IMR-90 (cell line): ENCODE measurements at regions of chr7 and their contacts with region 1.

Region 1: GRCh38 chr7:85750454-85750949 is 563.6 kb upstream of the SEMA3D start:
- DNase-seq: peak; percentile 37
- ATAC-seq: peak; percentile 93
- H3K4me3 ChIP-seq: no peak overlapping the region
- H3K27ac ChIP-seq: no peak overlapping the region
- H3K4me1 ChIP-seq: no peaks in the 10 kb centered on the region
- H3K27me3 ChIP-seq: no peaks in the 10 kb centered on the region
- CTCF ChIP-seq: peak; percentile 80
- POLR2A ChIP-seq: no peak
- RAD21 ChIP-seq: peak; percentile 80

Region 2: GRCh38 chr7:83921941-83922607 is 1828.4 kb before region 1 on chr7:
- CTCF ChIA-PET with region 1: no interaction called
- POLR2A ChIA-PET with region 1: no interaction called
- dilution Hi-C with region 1: no loop called
- in situ Hi-C with region 1: loop called (anchors 25 kb)
- intact Hi-C with region 1: no loop called
- DNase-seq: peak; percentile 69
- ATAC-seq: peak; percentile 81
- H3K4me3 ChIP-seq: no peak overlapping the region
- H3K27ac ChIP-seq: no peak overlapping the region
- H3K4me1 ChIP-seq: no peaks in the 10 kb centered on the region
- H3K27me3 ChIP-seq: no peaks in the 10 kb centered on the region
- CTCF ChIP-seq: no peak
- POLR2A ChIP-seq: no peak
- RAD21 ChIP-seq: no peak

Region 3: GRCh38 chr7:83936056-83936708 is 1814.3 kb before region 1 on chr7:
- CTCF ChIA-PET with region 1: no interaction called
- POLR2A ChIA-PET with region 1: no interaction called
- dilution Hi-C with region 1: no loop called
- in situ Hi-C with region 1: no loop called
- intact Hi-C with region 1: loop called (anchors 5 kb)
- DNase-seq: peak; percentile 81
- ATAC-seq: peak; percentile 95
- H3K4me3 ChIP-seq: no peak overlapping the region
- H3K27ac ChIP-seq: no peak overlapping the region
- H3K4me1 ChIP-seq: no peaks in the 10 kb centered on the region
- H3K27me3 ChIP-seq: no peaks in the 10 kb centered on the region
- CTCF ChIP-seq: peak; percentile 93
- POLR2A ChIP-seq: no peak
- RAD21 ChIP-seq: peak; percentile 95

Region 4: DNA sequence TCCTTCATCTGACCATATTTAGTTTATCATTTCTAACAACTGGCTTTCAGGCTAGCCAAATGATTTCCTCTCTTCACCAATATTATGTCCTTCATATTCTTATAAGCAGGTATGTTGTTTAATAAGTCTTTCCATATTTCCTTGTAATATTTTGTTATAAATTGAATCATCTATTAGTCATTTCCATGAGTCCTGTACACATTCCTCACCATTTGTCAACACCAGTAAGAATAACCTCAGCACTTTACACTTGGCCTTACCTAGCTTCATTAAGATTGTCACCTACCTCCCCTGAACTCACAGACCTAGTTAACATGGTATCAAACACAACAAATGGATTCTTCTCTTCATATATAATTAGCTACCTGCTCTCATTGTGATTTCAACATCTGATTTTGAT is 845.9 kb before region 1 on chr7:
- CTCF ChIA-PET with region 1: no interaction called
- POLR2A ChIA-PET with region 1: no interaction called
- dilution Hi-C with region 1: no loop called
- in situ Hi-C with region 1: no loop called
- intact Hi-C with region 1: no loop called
- DNase-seq: no peak
- ATAC-seq: no peak
- H3K4me3 ChIP-seq: no peak overlapping the region
- H3K27ac ChIP-seq: no peak overlapping the region
- H3K4me1 ChIP-seq: no peaks in the 10 kb centered on the region
- H3K27me3 ChIP-seq: no peaks in the 10 kb centered on the region
- CTCF ChIP-seq: no peak
- POLR2A ChIP-seq: no peak
- RAD21 ChIP-seq: no peak

Region 5: DNA sequence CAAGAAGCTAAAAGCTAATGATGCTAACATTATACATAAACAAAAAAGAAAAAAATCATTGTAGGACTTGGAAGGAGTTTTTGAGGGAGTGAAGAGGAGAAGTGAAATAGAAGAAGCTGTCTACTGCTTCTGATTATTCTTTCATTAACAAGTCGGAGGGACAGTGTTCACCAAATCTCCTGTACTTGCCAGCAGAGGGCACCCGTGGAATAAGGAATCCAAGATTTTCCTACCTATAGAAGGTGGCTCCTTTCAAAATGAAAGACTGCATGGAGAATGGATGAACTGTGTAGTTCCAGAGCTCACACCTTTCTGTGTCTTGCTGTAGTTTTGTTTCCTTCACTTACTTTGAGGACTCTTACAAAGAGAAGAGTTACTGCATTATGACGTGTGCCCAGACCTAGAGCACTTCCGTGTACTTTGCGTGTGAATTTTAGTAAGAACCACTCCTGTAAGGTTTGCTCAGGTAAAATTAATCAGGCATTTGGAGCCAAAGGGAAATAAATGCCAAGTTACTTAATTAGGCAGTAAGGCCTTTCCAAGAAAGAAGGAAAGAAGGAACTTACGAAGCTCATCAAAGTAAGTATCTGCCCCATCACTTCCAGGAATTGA is 708.8 kb before region 1 on chr7:
- CTCF ChIA-PET with region 1: interaction called, 4 read pairs
- POLR2A ChIA-PET with region 1: no interaction called
- dilution Hi-C with region 1: no loop called
- in situ Hi-C with region 1: loop called (anchors 5 kb)
- intact Hi-C with region 1: loop called (anchors 1 kb)
- DNase-seq: peak; percentile 69
- ATAC-seq: peak; percentile 73
- H3K4me3 ChIP-seq: no peak overlapping the region
- H3K27ac ChIP-seq: no peak overlapping the region
- H3K4me1 ChIP-seq: no peaks in the 10 kb centered on the region
- H3K27me3 ChIP-seq: no peaks in the 10 kb centered on the region
- CTCF ChIP-seq: peak; percentile 86
- POLR2A ChIP-seq: no peak
- RAD21 ChIP-seq: peak; percentile 92

Region 6: DNA sequence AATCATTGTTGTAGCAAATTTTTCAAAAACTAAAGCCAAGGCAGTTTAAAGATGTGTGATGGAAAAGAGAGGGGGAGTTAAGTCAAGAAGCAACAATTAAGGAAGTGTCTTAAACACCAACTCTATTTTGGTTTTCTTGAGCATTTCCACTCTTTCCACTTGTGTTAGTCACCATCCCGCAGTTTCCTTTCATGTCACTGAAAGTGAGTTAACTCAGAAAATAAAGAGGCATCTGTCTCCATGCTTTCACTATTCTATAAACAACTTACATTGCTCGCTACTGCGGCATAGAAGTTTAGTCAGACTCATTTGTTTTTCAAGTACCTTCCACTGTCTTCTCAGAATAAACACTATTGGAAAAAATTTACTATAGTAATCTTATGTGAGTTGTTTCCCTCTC is 278.8 kb before region 1 on chr7:
- CTCF ChIA-PET with region 1: no interaction called
- POLR2A ChIA-PET with region 1: no interaction called
- dilution Hi-C with region 1: no loop called
- in situ Hi-C with region 1: no loop called
- intact Hi-C with region 1: loop called (anchors 5 kb)
- DNase-seq: peak; percentile 86
- ATAC-seq: peak; percentile 95
- H3K4me3 ChIP-seq: no peak overlapping the region
- H3K27ac ChIP-seq: no peak overlapping the region
- H3K4me1 ChIP-seq: no peaks in the 10 kb centered on the region
- H3K27me3 ChIP-seq: no peaks in the 10 kb centered on the region
- CTCF ChIP-seq: no peak
- POLR2A ChIP-seq: no peak
- RAD21 ChIP-seq: no peak

Region 7: GRCh38 chr7:85554236-85555178 is 196.0 kb before region 1 on chr7:
- CTCF ChIA-PET with region 1: interaction called, 3 read pairs
- POLR2A ChIA-PET with region 1: no interaction called
- dilution Hi-C with region 1: no loop called
- in situ Hi-C with region 1: no loop called
- intact Hi-C with region 1: loop called (anchors 5 kb)
- DNase-seq: peak; percentile 82
- ATAC-seq: peak; percentile 84
- H3K4me3 ChIP-seq: no peak overlapping the region
- H3K27ac ChIP-seq: no peak overlapping the region
- H3K4me1 ChIP-seq: no peaks in the 10 kb centered on the region
- H3K27me3 ChIP-seq: no peaks in the 10 kb centered on the region
- CTCF ChIP-seq: peak; percentile 78
- POLR2A ChIP-seq: no peak
- RAD21 ChIP-seq: peak; percentile 82

Region 8: GRCh38 chr7:85940798-85941197 is 190.3 kb after region 1 on chr7:
- CTCF ChIA-PET with region 1: no interaction called
- POLR2A ChIA-PET with region 1: no interaction called
- dilution Hi-C with region 1: no loop called
- in situ Hi-C with region 1: no loop called
- intact Hi-C with region 1: no loop called
- DNase-seq: no peak
- ATAC-seq: no peak
- H3K4me3 ChIP-seq: no peak overlapping the region
- H3K27ac ChIP-seq: no peak overlapping the region
- H3K4me1 ChIP-seq: no peaks in the 10 kb centered on the region
- H3K27me3 ChIP-seq: no peaks in the 10 kb centered on the region
- CTCF ChIP-seq: no peak
- POLR2A ChIP-seq: no peak
- RAD21 ChIP-seq: no peak